ENCODE measurements at regions of chr17 and their contacts with region 1.

Region 1: GRCh38 chr17:30336369-30337171 is 2.7 kb upstream of the TMIGD1 start:
- DNase-seq: no peak
- ATAC-seq: peak; percentile 75 to 78
- H3K4me3 ChIP-seq: no peak overlapping the region
- H3K27ac ChIP-seq: no peak overlapping the region
- H3K4me1 ChIP-seq: peaks cover 12% of the 10 kb centered on the region
- H3K27me3 ChIP-seq: no peaks in the 10 kb centered on the region
- CTCF ChIP-seq: peak; percentile 62

Region 2: DNA sequence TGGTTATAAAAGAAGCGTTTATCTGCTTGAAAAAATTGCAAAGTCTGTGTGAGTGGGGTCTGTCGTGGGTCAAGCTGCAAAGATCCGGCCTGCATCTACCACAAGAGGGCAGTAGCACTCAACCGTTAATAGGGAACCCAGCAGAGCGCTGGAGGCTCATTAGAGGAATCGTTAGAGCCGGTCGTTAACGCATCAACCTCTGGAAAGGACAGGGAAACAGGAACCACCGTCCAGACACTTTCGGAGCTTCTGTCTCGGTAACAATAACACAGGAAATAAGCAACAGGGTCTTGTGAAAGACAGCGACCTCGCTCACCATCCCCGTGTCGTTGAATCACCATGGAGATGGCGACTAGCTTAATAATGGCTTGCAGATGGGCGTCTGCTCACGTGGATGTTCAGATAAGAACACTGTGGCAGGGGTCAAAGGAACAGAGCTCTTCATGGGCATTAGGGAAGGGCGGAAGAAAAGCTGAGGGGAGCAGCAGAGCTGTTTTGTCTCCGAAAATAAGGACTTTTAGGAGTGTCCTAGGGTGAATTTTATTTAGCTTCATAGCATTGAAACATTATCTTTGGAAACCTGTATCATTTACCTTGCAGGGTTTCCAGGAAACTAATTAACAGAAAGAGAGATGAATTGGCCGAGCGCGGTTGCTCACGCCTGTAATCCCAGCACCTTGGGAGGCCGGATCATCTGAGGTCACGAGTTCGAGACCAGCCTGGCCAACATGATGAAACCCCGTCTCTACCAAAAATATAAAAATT is 231.8 kb before region 1 on chr17:
- intact Hi-C with region 1: loop called (anchors 5 kb)
- DNase-seq: peak; percentile 84
- ATAC-seq: peak; percentile 98 to 99
- H3K4me3 ChIP-seq: peak overlapping the region; percentile 44
- H3K27ac ChIP-seq: peak overlapping the region; percentile 51
- H3K4me1 ChIP-seq: peaks cover 8% of the 10 kb centered on the region
- H3K27me3 ChIP-seq: no peaks in the 10 kb centered on the region
- CTCF ChIP-seq: peak; percentile 91